ENCODE measurements at regions of chr5 and their contacts with region 1.

Region 1: DNA sequence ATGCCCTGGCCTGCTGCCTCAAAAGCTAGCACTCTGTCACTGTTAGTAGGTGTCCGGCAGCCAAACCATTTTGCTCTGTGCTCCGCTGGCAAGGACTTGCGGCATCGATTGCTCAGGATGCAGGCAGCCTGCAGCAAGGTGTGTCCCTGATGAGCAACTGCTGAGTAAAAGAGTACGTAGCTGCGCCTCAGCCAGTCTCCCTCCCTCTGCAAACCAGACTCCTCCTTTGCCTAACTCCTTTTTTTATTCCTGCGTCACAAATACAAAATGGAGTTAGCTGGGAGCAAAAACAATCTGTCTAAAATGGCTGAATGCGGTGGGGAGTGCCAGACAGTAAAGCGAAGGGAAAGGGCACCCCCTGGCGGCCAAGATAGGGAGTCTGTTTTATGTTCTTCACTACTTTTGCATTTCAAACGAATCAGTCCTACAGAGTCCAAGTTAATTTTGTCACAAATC is 61.1 kb downstream of the DIAPH1 start:
- DNase-seq: peak; percentile 72 to 80 (median 75)
- ATAC-seq: peak; percentile 66 to 83 (median 78)
- H3K4me3 ChIP-seq: peak overlapping the region in 2 of 3 donors; percentile 8 to 37
- H3K27ac ChIP-seq: peak overlapping the region; percentile 52 to 66 (median 61)
- H3K4me1 ChIP-seq: peaks cover 0 to 12% (median 5%) of the 10 kb centered on the region in 4 donors
- H3K27me3 ChIP-seq: no peaks in the 10 kb centered on the region
- CTCF ChIP-seq: peak; percentile 79 to 87 (median 86)
- POLR2A ChIP-seq: no peak

Region 2: GRCh38 chr5:141402553-141403260 is 155.0 kb before region 1 on chr5 and contains the start of gene PCDHGA9:
- intact Hi-C with region 1: loop called in 1 of 2 experiments (anchors 10 kb)
- DNase-seq: peak in 1 of 3 donors; percentile 45
- ATAC-seq: peak; percentile 55 to 67 (median 62)
- H3K4me3 ChIP-seq: peak within 1 kb of the TSS in 1 of 3 donors; percentile 35
- H3K27ac ChIP-seq: no peak within 1 kb of the TSS
- H3K4me1 ChIP-seq: no peaks in the 10 kb centered on the region
- H3K27me3 ChIP-seq: no peaks in the 10 kb centered on the region
- CTCF ChIP-seq: peak in 3 of 4 donors; percentile 25 to 40 (median 33)
- POLR2A ChIP-seq: no peak
- total RNA-seq, gene PCDHGA9: 1.0 to 2.5 (median 1.3) TPM

Region 3: DNA sequence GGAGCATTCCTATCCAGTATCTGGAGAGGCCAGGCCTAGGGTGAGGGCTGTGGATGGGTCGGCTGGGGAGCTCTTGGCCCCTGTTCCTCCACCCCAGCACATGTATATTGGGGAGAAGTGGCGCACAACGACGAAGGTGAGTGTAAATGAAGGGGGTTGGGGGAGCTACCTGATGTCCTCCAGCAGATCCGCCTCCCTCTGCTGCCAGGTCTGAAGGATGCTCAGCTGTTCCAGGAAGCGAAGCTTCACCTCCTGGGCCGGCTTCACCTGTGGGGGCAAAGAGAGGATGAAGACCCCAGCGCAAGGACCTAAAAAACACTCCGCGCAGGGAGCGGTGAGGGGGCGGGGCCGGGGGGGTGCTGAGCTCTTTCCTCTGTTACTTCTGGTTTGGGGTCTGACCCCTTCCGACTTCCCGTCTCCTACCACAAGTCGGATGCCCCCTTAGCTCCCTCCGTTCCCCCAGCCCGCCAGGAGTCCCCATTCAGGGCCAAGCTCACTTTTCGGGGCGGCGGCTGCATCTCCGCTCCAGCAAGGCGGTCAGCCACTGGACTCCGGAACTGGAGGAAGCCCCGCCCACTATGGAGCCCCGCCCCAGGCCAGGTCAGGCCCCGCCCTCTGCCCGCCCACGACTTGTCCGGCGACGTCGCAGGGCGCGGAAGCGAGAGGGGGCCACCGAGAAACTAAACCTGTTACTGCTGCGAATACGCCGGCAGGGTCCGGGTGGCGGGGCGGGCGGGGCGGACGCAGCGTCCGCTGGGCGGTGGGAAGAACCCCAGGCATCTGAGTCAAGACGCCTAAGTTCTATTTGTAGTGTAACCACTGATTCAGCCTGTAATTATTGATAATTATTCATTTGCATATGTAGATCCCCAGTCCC is 93.4 kb after region 1 on chr5 and contains the start of gene FCHSD1:
- intact Hi-C with region 1: no loop called
- DNase-seq: peak; percentile 90 to 93 (median 92)
- ATAC-seq: peak; percentile 95 to 99 (median 98)
- H3K4me3 ChIP-seq: peak within 1 kb of the TSS; percentile 35 to 62 (median 54)
- H3K27ac ChIP-seq: peak within 1 kb of the TSS in 2 of 3 donors; percentile 10 to 43
- H3K4me1 ChIP-seq: no peaks in the 10 kb centered on the region
- H3K27me3 ChIP-seq: no peaks in the 10 kb centered on the region
- CTCF ChIP-seq: peak in 1 of 4 donors; percentile 16
- POLR2A ChIP-seq: peak; percentile 13
- total RNA-seq, gene FCHSD1: 0.77 to 6.4 (median 3.3) TPM

Region 4: GRCh38 chr5:141713616-141714309 is 156.1 kb after region 1 on chr5:
- intact Hi-C with region 1: no loop called
- DNase-seq: no peak
- ATAC-seq: peak in 2 of 4 donors; percentile 50 to 60
- H3K4me3 ChIP-seq: no peak overlapping the region
- H3K27ac ChIP-seq: no peak overlapping the region
- H3K4me1 ChIP-seq: no peaks in the 10 kb centered on the region
- H3K27me3 ChIP-seq: no peaks in the 10 kb centered on the region
- CTCF ChIP-seq: no peak
- POLR2A ChIP-seq: no peak

Region 5: GRCh38 chr5:141757402-141757801 is 199.7 kb after region 1 on chr5:
- intact Hi-C with region 1: no loop called
- DNase-seq: no peak
- ATAC-seq: peak; percentile 53 to 76 (median 60)
- H3K4me3 ChIP-seq: no peak overlapping the region
- H3K27ac ChIP-seq: no peak overlapping the region
- H3K4me1 ChIP-seq: no peaks in the 10 kb centered on the region
- H3K27me3 ChIP-seq: no peaks in the 10 kb centered on the region
- CTCF ChIP-seq: peak; percentile 13 to 29 (median 26)
- POLR2A ChIP-seq: no peak